ENCODE measurements at regions of chr11 and their contacts with region 1.

Region 1: GRCh38 chr11:128026596-128026995 is 560.8 kb downstream of the ETS1 start:
- DNase-seq: no peak
- H3K4me3 Mint-ChIP-seq: no peak overlapping the region
- H3K27ac Mint-ChIP-seq: no peak overlapping the region
- H3K4me1 Mint-ChIP-seq: peaks cover 9% of the 10 kb centered on the region
- H3K27me3 Mint-ChIP-seq: peaks cover 37% of the 10 kb centered on the region

Region 2: DNA sequence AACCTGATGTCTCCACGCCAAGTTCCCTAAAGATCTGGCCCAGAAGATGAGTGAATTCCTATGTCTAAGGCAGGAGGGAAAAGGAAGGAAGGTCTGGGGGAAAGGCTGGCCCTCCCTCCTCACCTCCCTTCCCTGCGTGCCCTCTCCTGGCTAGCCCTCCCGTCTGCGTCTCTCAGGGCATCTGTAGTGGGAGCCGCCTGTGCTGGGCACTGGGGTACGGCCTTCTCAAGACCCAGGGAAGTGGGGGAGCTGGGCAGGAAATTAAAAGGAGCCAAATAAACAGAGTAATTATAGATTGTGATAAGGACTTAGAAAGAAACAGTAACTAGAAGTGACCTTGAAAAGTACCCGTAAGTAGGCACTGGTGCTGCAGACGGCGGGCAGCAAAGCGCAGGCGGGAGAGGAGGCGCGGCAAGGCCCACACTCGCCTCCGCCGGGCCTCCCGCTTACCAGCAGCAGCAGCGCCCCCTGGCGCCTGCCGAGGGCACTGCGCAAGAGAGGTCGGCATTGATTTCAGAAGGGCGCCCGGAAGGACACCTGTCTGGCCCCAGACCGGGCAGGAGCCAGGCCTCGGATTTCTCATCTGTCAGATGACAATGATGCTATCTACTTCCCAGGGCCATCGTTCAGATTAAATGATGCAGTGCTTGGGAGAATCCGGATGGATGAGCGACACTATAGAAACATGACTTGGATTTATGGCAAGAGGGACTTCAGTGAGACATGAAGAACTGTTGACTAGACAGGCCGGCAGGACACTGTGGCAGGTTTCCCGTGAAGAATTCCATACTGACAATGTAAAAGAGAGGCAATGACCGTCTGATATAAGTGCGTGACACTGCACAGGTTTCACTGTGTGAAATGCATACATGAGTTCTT is 833.2 kb after region 1 on chr11:
- intact Hi-C with region 1: loop called (anchors 1 kb)
- DNase-seq: peak; percentile 94
- H3K4me3 Mint-ChIP-seq: no peak overlapping the region
- H3K27ac Mint-ChIP-seq: no peak overlapping the region
- H3K4me1 Mint-ChIP-seq: peaks cover 3% of the 10 kb centered on the region
- H3K27me3 Mint-ChIP-seq: peaks cover 9% of the 10 kb centered on the region

Measured in activated CD4-positive, alpha-beta T cell treated with anti-CD3 and anti-CD28 coated beads, Interleukin-2, amount 10 ng/mL, durations not matched to agents 24 days and 14 days (primary cell).